ENCODE measurements at regions of chr12 and their contacts with region 1.

Region 1: DNA sequence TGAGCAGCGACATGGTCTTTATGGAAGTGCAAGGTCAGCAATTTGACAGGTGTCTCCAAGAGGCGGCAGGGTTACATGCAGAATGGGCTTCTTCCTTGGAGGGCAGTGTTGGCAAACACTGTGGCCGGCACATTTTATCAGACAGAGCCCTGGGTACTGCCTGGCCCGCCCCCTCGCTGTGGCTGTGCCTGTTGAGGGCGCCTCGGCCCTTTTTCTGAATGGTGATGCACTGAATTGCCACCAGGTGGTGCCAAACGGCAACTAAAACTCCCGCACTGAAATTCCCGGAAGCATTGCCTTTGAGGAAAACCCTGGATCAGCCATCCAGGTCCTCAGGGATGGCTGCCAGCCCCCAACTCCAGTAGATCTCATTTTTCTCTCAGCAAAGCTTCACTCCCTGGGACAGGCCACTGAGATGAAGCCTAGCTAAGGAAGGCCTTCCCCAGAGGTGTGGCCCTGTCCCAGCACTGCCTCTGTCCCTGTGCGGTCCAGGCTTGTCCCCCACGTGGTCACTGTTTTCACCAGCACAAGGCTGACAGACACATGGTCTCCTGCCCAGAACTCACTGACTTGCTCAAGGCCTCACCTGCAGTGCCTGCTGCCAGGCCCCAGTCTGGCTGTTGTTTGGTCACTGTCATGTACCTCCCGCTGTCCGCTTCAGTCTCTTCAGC is 73.6 kb downstream of the TESC start:
- DNase-seq: peak; percentile 76
- H3K4me3 Mint-ChIP-seq: no peak overlapping the region
- H3K27ac Mint-ChIP-seq: peak overlapping the region; percentile 80
- H3K4me1 Mint-ChIP-seq: peaks cover 18% of the 10 kb centered on the region
- H3K27me3 Mint-ChIP-seq: no peaks in the 10 kb centered on the region
- CTCF ChIP-seq: peak; percentile 93

Region 2: DNA sequence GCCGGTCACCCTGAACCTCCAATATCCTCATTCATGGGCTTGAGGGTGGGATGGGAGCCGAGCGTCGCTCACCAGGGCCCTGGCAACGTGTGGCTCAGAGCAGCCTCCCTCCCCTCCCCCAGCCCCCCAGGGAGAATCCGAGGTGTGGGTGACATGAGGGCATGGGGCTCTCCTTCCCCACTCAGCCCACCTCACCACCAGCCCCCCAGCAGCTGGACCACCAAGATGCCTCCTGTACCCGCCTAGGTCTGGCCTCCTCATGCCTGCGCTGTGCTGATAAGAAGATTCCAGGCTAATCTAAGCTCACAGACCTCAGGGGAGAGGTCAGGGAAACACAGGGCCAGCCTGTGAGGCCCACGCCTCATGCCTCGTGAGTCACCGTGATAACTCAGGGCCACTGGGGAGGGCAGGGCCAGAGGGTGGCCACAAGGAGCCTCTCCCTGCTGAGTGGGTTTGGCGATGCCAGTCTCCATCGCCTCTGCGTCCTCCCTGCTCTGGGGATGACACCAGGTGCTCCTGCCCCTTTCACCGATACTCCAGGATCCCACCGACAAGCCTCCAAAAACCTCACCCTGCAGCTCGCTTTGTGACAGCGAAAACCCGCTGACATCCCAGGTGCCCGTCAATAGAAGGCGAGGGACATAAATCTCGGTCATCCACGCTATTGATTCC is 16.7 kb after region 1 on chr12:
- CTCF ChIA-PET with region 1: no interaction called
- intact Hi-C with region 1: no loop called
- DNase-seq: peak; percentile 65
- H3K4me3 Mint-ChIP-seq: peak overlapping the region; percentile 39
- H3K27ac Mint-ChIP-seq: peak overlapping the region; percentile 84
- H3K4me1 Mint-ChIP-seq: peaks cover 34% of the 10 kb centered on the region
- H3K27me3 Mint-ChIP-seq: no peaks in the 10 kb centered on the region
- CTCF ChIP-seq: no peak

Region 3: GRCh38 chr12:117098361-117099217 is 73.0 kb after region 1 on chr12:
- CTCF ChIA-PET with region 1: no interaction called
- intact Hi-C with region 1: loop called (anchors 5 kb)
- DNase-seq: no peak
- H3K4me3 Mint-ChIP-seq: peak overlapping the region; percentile 97
- H3K27ac Mint-ChIP-seq: peak overlapping the region; percentile 99
- H3K4me1 Mint-ChIP-seq: peaks cover 36% of the 10 kb centered on the region
- H3K27me3 Mint-ChIP-seq: no peaks in the 10 kb centered on the region
- CTCF ChIP-seq: no peak

Region 4: GRCh38 chr12:117119592-117120198 is 94.1 kb after region 1 on chr12:
- CTCF ChIA-PET with region 1: interaction called, 4 read pairs
- intact Hi-C with region 1: loop called (anchors 1 kb)
- DNase-seq: peak; percentile 63
- H3K4me3 Mint-ChIP-seq: no peak overlapping the region
- H3K27ac Mint-ChIP-seq: no peak overlapping the region
- H3K4me1 Mint-ChIP-seq: peaks cover 10% of the 10 kb centered on the region
- H3K27me3 Mint-ChIP-seq: no peaks in the 10 kb centered on the region
- CTCF ChIP-seq: peak; percentile 77

Region 5: DNA sequence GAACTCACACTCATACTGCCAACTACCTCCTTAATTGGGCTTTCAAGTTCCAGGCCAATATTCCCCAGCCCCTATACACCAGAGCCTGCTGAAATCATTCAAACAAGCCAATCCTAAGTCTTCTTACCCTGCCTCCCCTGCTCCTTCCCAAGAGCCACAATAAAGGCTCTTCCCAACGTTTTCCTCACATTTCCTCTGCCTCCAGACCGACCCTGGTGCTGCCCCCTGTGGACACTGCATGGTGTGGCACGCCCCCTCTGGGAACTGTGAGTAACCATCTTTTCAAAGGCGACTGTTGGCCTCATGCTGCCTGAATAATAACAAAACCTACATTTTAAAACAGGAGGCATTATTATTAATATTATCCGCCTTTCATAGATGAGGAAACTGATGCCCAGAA is 447.4 kb after region 1 on chr12:
- CTCF ChIA-PET with region 1: no interaction called
- intact Hi-C with region 1: no loop called
- DNase-seq: peak; percentile 45
- H3K4me3 Mint-ChIP-seq: no peak overlapping the region
- H3K27ac Mint-ChIP-seq: no peak overlapping the region
- H3K4me1 Mint-ChIP-seq: no peaks in the 10 kb centered on the region
- H3K27me3 Mint-ChIP-seq: peaks cover 38% of the 10 kb centered on the region
- CTCF ChIP-seq: peak; percentile 49